Left lung (tissue), 14 donors: ENCODE measurements at regions of chr3 and their contacts with region 1.

Region 1: GRCh38 chr3:124935264-124935663 is 713 bp upstream of the MUC13 start:
- DNase-seq: no peak
- ATAC-seq: no peak
- H3K4me3 ChIP-seq: no peak overlapping the region
- H3K27ac ChIP-seq: no peak overlapping the region
- H3K4me1 ChIP-seq: no peaks in the 10 kb centered on the region
- H3K27me3 ChIP-seq: no peaks in the 10 kb centered on the region
- CTCF ChIP-seq: no peak

Region 2: DNA sequence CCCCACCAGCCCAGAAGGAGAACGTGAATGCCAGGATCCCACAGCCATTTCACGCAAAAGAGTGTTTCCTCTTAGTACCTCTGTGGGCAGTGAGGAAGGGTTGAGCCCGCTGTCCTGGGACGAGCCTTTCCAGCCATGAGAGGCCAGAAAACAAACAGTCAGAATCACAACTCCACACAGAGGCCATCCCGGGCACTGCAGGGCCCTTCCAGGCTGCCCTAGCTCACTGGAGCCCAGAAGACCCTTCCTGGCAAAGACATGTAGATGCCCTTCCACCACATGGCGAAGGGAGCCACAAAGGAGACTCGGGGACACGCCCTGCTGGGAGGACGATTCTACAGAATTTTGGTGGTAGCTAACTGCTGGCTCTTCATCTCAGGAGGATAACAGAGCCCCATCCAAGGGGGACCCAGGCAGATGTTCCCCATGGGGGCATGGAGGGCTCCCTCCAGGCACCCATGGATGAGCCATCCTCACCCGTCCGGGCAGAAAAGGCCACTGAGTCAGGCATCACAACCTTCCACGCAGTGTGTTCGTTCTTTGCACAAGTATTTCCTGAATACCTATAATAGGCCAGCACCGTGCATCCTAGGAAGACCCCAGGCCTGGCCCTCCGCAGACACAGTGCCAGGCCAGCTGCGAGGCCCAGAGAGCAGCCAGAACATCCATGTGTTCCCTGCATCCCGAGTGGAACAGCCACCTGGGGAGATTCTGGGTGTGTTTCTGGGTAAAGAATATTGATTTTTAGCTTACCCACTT is 230.1 kb after region 1 on chr3:
- intact Hi-C with region 1: loop called in 1 of 2 experiments (anchors 10 kb)
- DNase-seq: peak in 1 of 4 donors; percentile 55
- ATAC-seq: peak; percentile 78
- H3K4me3 ChIP-seq: no peak overlapping the region
- H3K27ac ChIP-seq: no peak overlapping the region
- H3K4me1 ChIP-seq: peaks cover 8 to 40% of the 10 kb centered on the region in 2 donors
- H3K27me3 ChIP-seq: no peaks in the 10 kb centered on the region
- CTCF ChIP-seq: peak; percentile 59 to 78